ENCODE measurements at regions of chr7 and their contacts with region 1.

Region 1: GRCh38 chr7:74656837-74657691 is 454 bp upstream of the GTF2I start:
- DNase-seq: peak; percentile 94 to 97 (median 97)
- ATAC-seq: peak; percentile 88
- H3K4me3 ChIP-seq: peak overlapping the region; percentile 96
- H3K4me3 Mint-ChIP-seq: peak overlapping the region; percentile 90 to 97 (median 94)
- H3K27ac ChIP-seq: peak overlapping the region; percentile 89
- H3K27ac Mint-ChIP-seq: peak overlapping the region; percentile 86 to 98 (median 94)
- H3K4me1 ChIP-seq: peaks cover 12 to 21% of the 10 kb centered on the region in 2 donors
- H3K4me1 Mint-ChIP-seq: peaks cover 35 to 55% (median 43%) of the 10 kb centered on the region in 7 donors
- H3K27me3 ChIP-seq: no peaks in the 10 kb centered on the region
- H3K27me3 Mint-ChIP-seq: peaks cover 0 to 2% (median 0%) of the 10 kb centered on the region in 5 donors

Region 2: GRCh38 chr7:74173866-74174605 is 483.0 kb before region 1 on chr7 and contains the start of gene EIF4H:
- CTCF ChIA-PET with region 1: no interaction called
- POLR2A ChIA-PET with region 1: interaction called, 3 read pairs
- intact Hi-C with region 1: loop called (anchors 2 to 10 kb)
- DNase-seq: peak; percentile 90 to 97 (median 95)
- ATAC-seq: peak; percentile 97
- H3K4me3 ChIP-seq: peak within 1 kb of the TSS; percentile 87
- H3K4me3 Mint-ChIP-seq: peak within 1 kb of the TSS; percentile 86 to 98 (median 92)
- H3K27ac ChIP-seq: peak within 1 kb of the TSS; percentile 99
- H3K27ac Mint-ChIP-seq: peak within 1 kb of the TSS; percentile 88 to 97 (median 94)
- H3K4me1 ChIP-seq: peaks cover 41 to 43% of the 10 kb centered on the region in 2 donors
- H3K4me1 Mint-ChIP-seq: peaks cover 32 to 57% (median 47%) of the 10 kb centered on the region in 7 donors
- H3K27me3 ChIP-seq: no peaks in the 10 kb centered on the region
- H3K27me3 Mint-ChIP-seq: no peaks in the 10 kb centered on the region
- total RNA-seq, gene EIF4H: 163 to 284 (median 223) TPM

Region 3: DNA sequence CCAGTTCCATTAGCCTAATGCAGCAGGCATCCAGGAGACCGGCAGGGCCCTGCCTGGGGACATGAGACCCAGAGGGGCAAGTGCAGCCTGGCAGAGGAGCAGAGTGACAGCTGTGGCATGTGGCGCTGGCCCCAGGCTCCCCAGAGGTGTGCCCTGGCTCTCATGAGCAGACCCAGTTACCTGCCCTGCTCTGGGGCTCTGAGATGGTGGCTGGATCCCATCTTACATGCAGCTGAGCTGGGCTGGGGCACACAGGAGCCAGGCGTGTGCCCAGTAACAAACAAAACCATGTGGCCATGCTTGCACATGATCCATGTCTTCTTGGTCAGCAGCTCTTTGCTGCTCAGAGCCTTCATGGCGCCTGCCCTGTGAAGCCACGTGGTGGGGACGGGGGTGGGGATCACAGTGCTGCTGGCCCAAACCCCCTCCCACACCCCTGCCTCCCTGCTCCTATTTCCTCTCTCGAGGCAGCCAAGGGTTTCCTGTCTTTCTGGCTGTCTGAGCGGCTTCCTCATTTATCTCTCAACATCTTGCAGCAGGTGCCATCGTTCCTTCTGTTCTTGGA is 39.8 kb before region 1 on chr7:
- CTCF ChIA-PET with region 1: no interaction called
- POLR2A ChIA-PET with region 1: interaction called, 5 read pairs
- intact Hi-C with region 1: loop called in 1 of 2 experiments (anchors 1 kb)
- DNase-seq: peak in 4 of 9 donors; percentile 5 to 31 (median 28)
- ATAC-seq: peak; percentile 53
- H3K4me3 ChIP-seq: no peak overlapping the region
- H3K4me3 Mint-ChIP-seq: peak overlapping the region; percentile 73 to 90 (median 82)
- H3K27ac ChIP-seq: peak overlapping the region; percentile 46
- H3K27ac Mint-ChIP-seq: peak overlapping the region; percentile 72 to 95 (median 90)
- H3K4me1 ChIP-seq: peaks cover 0 to 22% of the 10 kb centered on the region in 2 donors
- H3K4me1 Mint-ChIP-seq: peaks cover 14 to 31% (median 25%) of the 10 kb centered on the region in 7 donors
- H3K27me3 ChIP-seq: no peaks in the 10 kb centered on the region
- H3K27me3 Mint-ChIP-seq: no peaks in the 10 kb centered on the region

Region 4: GRCh38 chr7:74625446-74625845 is 31.6 kb before region 1 on chr7:
- CTCF ChIA-PET with region 1: interaction called, 5 read pairs
- POLR2A ChIA-PET with region 1: interaction called, 4 read pairs
- intact Hi-C with region 1: loop called in 1 of 2 experiments (anchors 2 kb)
- DNase-seq: peak in 6 of 9 donors; percentile 18 to 38 (median 28)
- ATAC-seq: no peak
- H3K4me3 ChIP-seq: no peak overlapping the region
- H3K4me3 Mint-ChIP-seq: no peak overlapping the region
- H3K27ac ChIP-seq: no peak overlapping the region
- H3K27ac Mint-ChIP-seq: no peak overlapping the region
- H3K4me1 ChIP-seq: no peaks in the 10 kb centered on the region
- H3K4me1 Mint-ChIP-seq: peaks cover 0 to 10% (median 5%) of the 10 kb centered on the region in 7 donors
- H3K27me3 ChIP-seq: no peaks in the 10 kb centered on the region
- H3K27me3 Mint-ChIP-seq: peaks cover 0 to 4% (median 0%) of the 10 kb centered on the region in 5 donors

Region 5: DNA sequence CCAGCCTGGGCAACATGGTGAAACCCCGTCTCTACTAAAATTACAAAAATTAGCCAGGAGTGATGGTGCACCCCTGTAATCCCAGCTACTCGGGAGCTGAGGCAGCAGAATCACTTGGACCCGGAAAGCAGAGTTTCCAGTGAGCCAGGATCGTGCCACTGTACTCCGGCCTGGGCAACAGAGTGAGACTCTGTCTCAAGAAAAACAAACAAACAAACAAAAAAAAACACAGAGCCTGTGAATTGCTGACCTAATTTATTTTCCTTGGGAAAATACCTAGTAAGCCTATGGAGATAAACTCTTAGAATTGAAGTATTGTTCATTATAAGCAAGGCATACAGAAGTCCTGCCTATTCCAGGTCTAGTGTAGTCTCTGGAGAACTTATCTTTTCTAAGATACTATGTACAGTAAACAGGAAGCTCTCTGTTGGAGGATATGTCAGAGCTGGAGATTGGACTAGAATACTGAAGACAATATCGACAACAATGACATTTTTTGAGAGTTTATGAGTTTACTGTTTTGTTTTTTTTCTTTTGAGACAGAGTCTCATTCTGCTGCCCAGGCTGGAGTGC is 15.4 kb after region 1 on chr7:
- CTCF ChIA-PET with region 1: interaction called, 3 read pairs
- POLR2A ChIA-PET with region 1: interaction called, 6 read pairs
- intact Hi-C with region 1: loop called in 1 of 2 experiments (anchors 1 kb)
- DNase-seq: no peak
- ATAC-seq: no peak
- H3K4me3 ChIP-seq: no peak overlapping the region
- H3K4me3 Mint-ChIP-seq: no peak overlapping the region
- H3K27ac ChIP-seq: peak overlapping the region; percentile 6
- H3K27ac Mint-ChIP-seq: peak overlapping the region in 3 of 9 donors; percentile 28 to 59 (median 41)
- H3K4me1 ChIP-seq: peaks cover 0 to 14% of the 10 kb centered on the region in 2 donors
- H3K4me1 Mint-ChIP-seq: peaks cover 6 to 75% (median 39%) of the 10 kb centered on the region in 7 donors
- H3K27me3 ChIP-seq: no peaks in the 10 kb centered on the region
- H3K27me3 Mint-ChIP-seq: no peaks in the 10 kb centered on the region

Region 6: GRCh38 chr7:75066521-75066920 is 409.5 kb after region 1 on chr7:
- CTCF ChIA-PET with region 1: no interaction called
- POLR2A ChIA-PET with region 1: no interaction called
- intact Hi-C with region 1: no loop called
- DNase-seq: no peak
- ATAC-seq: no peak
- H3K4me3 ChIP-seq: no peak overlapping the region
- H3K4me3 Mint-ChIP-seq: no peak overlapping the region
- H3K27ac ChIP-seq: no peak overlapping the region
- H3K27ac Mint-ChIP-seq: no peak overlapping the region
- H3K4me1 ChIP-seq: no peaks in the 10 kb centered on the region
- H3K4me1 Mint-ChIP-seq: peaks cover 0 to 3% (median 1%) of the 10 kb centered on the region in 7 donors
- H3K27me3 ChIP-seq: no peaks in the 10 kb centered on the region
- H3K27me3 Mint-ChIP-seq: no peaks in the 10 kb centered on the region

Region 7: GRCh38 chr7:76047811-76048667 is 1391.0 kb after region 1 on chr7 and contains the starts of genes MDH2 and STYXL1:
- CTCF ChIA-PET with region 1: no interaction called
- POLR2A ChIA-PET with region 1: no interaction called
- intact Hi-C with region 1: loop called in 1 of 2 experiments (anchors 5 kb)
- DNase-seq: peak; percentile 68 to 89 (median 76)
- ATAC-seq: peak; percentile 92
- H3K4me3 ChIP-seq: peak within 1 kb of the TSS; percentile 95
- H3K4me3 Mint-ChIP-seq: peak within 1 kb of the TSS; percentile 90 to 99 (median 97)
- H3K27ac ChIP-seq: peak within 1 kb of the TSS; percentile 80
- H3K27ac Mint-ChIP-seq: peak within 1 kb of the TSS; percentile 92 to 98 (median 97)
- H3K4me1 ChIP-seq: peaks cover 7 to 17% of the 10 kb centered on the region in 2 donors
- H3K4me1 Mint-ChIP-seq: peaks cover 36 to 70% (median 53%) of the 10 kb centered on the region in 7 donors
- H3K27me3 ChIP-seq: no peaks in the 10 kb centered on the region
- H3K27me3 Mint-ChIP-seq: no peaks in the 10 kb centered on the region
- total RNA-seq, gene MDH2: 71.7 to 172 (median 74.6) TPM
- total RNA-seq, gene STYXL1: 11.3 to 31.7 (median 20.0) TPM